ENCODE measurements at regions of chr2 and their contacts with region 1.

Region 1: DNA sequence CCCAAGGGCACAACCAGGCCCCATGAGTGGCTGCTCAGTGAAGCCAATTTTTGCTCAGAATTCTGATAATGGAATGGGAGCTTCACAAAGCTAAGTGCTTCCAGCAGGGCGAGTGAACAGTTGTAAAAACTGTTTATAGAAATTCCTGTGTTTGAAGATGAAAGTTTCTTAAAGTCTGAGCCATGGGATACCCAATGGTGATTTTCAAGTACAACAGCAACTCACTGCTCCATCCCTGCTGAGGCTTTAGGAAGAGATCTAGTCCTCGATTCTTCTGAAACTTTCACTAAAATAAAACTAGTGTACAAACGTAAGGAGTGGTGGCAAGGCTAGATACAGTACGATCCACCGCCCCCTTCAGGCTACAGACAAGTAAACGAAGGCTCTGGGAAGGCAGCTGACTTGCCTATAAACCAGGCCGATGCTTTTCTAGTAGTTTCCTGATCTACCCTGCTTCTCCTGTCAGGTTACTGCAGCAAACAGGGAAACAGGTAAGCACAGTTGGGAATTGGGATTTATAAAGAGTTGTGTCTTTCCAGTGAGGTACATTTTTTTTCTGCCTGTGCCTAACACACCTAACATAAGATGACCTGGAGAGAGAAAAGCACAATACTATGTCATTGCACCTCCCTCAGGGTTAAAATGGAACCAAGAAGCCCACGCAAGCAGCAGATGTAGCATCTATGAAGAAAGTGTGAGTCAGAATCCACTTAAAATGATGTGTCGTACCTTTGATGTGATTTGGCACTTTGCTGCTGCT is 108.7 kb downstream of the UXS1 start:
- DNase-seq: peak; percentile 77
- H3K4me3 Mint-ChIP-seq: peak overlapping the region; percentile 1
- H3K27ac Mint-ChIP-seq: peak overlapping the region; percentile 82
- H3K4me1 Mint-ChIP-seq: peaks cover 61% of the 10 kb centered on the region
- H3K27me3 Mint-ChIP-seq: no peaks in the 10 kb centered on the region

Region 2: DNA sequence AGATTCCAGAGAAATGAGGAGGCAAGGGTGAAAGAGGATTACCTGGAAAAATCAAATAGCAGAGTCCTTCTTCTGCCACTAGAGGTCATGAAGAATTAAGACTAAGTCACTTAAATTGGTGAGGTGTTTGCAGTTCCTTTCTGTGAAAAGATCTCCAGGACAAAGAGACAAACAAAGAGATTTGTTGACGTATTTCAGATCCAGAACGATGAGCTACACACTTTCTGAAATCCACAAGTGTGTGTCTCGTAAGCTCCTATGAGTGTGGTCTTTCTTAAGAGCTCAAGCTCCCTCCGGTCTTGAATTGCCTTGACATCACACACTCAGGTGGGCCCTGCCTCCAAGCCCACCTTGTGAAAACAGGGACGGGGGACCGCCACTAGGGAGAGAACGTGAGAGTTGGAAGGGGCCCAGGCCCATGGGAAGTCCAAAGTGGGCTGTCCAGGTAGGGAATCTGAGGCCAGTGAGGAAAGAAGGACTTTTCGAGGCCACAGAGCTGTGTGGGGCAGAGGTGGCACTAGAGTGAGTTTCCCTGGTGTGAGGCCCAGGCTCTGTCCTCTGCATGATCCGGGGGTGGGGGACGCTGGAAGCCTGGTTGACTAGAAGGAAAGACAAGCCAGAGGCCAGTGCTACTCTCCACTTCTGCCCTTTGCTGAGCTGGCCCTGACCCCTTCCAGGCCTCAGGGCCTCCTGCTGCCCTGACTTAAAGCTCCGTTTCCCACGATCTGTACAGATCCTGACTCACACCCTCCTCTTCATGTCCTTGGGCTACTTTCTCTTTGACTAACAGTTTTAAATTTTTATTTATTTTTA is 508.7 kb before region 1 on chr2:
- CTCF ChIA-PET with region 1: interaction called, 27 read pairs
- DNase-seq: no peak
- H3K4me3 Mint-ChIP-seq: no peak overlapping the region
- H3K27ac Mint-ChIP-seq: no peak overlapping the region
- H3K4me1 Mint-ChIP-seq: peaks cover 21% of the 10 kb centered on the region
- H3K27me3 Mint-ChIP-seq: peaks cover 21% of the 10 kb centered on the region

Region 3: GRCh38 chr2:105775809-105776559 is 309.4 kb before region 1 on chr2:
- CTCF ChIA-PET with region 1: interaction called, 10 read pairs
- DNase-seq: peak; percentile 59
- H3K4me3 Mint-ChIP-seq: peak overlapping the region; percentile 68
- H3K27ac Mint-ChIP-seq: peak overlapping the region; percentile 91
- H3K4me1 Mint-ChIP-seq: peaks cover 94% of the 10 kb centered on the region
- H3K27me3 Mint-ChIP-seq: no peaks in the 10 kb centered on the region

Region 4: GRCh38 chr2:105782123-105782522 is 303.2 kb before region 1 on chr2:
- CTCF ChIA-PET with region 1: interaction called, 11 read pairs
- DNase-seq: no peak
- H3K4me3 Mint-ChIP-seq: peak overlapping the region; percentile 44
- H3K27ac Mint-ChIP-seq: peak overlapping the region; percentile 82
- H3K4me1 Mint-ChIP-seq: peaks cover 93% of the 10 kb centered on the region
- H3K27me3 Mint-ChIP-seq: no peaks in the 10 kb centered on the region

Region 5: GRCh38 chr2:105886029-105886454 is 199.3 kb before region 1 on chr2:
- CTCF ChIA-PET with region 1: no interaction called
- DNase-seq: no peak
- H3K4me3 Mint-ChIP-seq: no peak overlapping the region
- H3K27ac Mint-ChIP-seq: no peak overlapping the region
- H3K4me1 Mint-ChIP-seq: peaks cover 40% of the 10 kb centered on the region
- H3K27me3 Mint-ChIP-seq: no peaks in the 10 kb centered on the region

Region 6: GRCh38 chr2:105929516-105929915 is 155.8 kb before region 1 on chr2:
- CTCF ChIA-PET with region 1: interaction called, 10 read pairs
- DNase-seq: peak; percentile 54
- H3K4me3 Mint-ChIP-seq: no peak overlapping the region
- H3K27ac Mint-ChIP-seq: peak overlapping the region; percentile 65
- H3K4me1 Mint-ChIP-seq: peaks cover 56% of the 10 kb centered on the region
- H3K27me3 Mint-ChIP-seq: no peaks in the 10 kb centered on the region

Region 7: DNA sequence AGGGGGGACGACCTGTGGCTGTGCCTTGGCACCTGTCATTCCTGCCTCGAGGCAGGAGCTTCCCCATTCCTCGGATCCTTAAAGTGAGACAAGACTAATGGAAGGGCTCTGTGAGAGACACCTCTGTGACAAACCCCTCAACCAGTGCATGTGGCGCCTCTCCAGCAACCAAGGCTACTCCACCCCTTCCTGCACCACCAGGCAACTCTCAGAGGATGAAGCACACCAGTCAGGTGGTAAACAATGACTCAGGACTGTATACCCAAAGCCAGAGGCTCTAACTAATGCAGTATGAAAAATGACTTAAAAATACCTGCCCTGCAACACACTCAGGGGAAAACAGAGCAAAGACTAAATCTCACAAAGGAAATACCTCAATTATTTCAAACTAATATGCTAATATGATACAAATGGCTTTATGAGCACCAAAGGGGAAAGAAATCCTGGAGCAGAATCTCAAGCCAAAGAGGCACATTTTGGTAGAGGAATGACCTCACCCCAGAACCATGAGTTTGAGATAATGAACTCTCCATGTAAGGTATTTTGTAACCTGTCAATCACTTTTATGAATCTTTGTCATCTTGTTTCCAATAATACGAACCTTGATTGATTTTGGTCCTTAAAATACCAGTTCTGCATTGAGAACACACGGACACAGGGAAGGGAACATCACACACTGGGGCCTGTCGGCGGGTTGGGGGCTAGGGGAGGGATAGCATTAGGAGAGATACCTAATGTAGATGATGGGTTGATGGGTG is 28.0 kb before region 1 on chr2:
- CTCF ChIA-PET with region 1: no interaction called
- DNase-seq: peak; percentile 77
- H3K4me3 Mint-ChIP-seq: peak overlapping the region; percentile 0
- H3K27ac Mint-ChIP-seq: peak overlapping the region; percentile 90
- H3K4me1 Mint-ChIP-seq: peaks cover 84% of the 10 kb centered on the region
- H3K27me3 Mint-ChIP-seq: peaks cover 6% of the 10 kb centered on the region

Region 8: DNA sequence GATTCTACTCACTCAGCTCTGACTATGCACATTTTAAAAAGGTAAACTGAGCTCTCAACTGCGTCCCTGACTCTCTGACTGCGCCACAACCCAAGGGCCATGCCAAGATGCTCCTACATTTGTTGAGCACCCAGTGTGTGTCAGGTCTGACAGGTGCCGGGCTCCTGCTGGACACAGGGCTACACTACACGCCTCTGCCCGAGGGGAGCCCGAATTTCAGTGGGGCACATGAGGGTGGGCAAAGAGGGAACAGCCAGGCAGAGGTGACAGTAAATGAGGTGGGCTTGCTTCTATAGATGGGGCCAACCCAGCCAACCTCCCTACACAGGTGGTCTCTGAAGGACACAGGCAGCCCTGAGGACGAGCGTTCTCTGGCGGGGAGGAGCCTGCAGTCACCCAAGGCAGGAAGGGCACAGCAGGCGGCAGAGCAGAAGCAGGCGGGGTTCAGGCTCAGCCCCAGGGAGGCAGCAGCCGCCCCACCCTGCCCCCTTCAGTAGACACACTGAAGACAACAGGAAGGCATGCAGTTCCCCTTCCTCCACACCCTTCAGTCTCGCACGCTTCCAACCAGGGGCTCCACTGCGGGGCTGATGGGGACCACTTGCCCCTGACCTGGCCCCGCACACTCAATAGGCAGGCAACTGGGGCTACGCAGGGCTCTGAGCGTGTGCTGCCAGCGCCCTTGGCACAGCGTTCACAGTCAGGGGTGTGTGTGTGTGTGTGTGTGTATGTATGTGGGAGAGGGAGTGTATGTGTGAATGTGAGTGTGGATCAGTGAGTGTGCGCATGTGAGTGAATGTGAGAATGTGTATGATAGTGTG is 10.3 kb after region 1 on chr2:
- CTCF ChIA-PET with region 1: interaction called, 22 read pairs
- DNase-seq: peak; percentile 92
- H3K4me3 Mint-ChIP-seq: peak overlapping the region; percentile 75
- H3K27ac Mint-ChIP-seq: peak overlapping the region; percentile 94
- H3K4me1 Mint-ChIP-seq: peaks cover 83% of the 10 kb centered on the region
- H3K27me3 Mint-ChIP-seq: no peaks in the 10 kb centered on the region

Region 9: GRCh38 chr2:107281637-107282036 is 1196.3 kb after region 1 on chr2:
- CTCF ChIA-PET with region 1: no interaction called
- DNase-seq: no peak
- H3K4me3 Mint-ChIP-seq: no peak overlapping the region
- H3K27ac Mint-ChIP-seq: no peak overlapping the region
- H3K4me1 Mint-ChIP-seq: no peaks in the 10 kb centered on the region
- H3K27me3 Mint-ChIP-seq: no peaks in the 10 kb centered on the region

Measured in activated naive CD4-positive, alpha-beta T cell treated with anti-CD3 and anti-CD28 coated beads, Interleukin-2, amount 10 ng/mL, durations not matched to agents 7 days and 5 days (primary cell).